Thyroid gland (tissue), 4 donors: ENCODE measurements at regions of chr16 and their contacts with region 1.

Region 1: DNA sequence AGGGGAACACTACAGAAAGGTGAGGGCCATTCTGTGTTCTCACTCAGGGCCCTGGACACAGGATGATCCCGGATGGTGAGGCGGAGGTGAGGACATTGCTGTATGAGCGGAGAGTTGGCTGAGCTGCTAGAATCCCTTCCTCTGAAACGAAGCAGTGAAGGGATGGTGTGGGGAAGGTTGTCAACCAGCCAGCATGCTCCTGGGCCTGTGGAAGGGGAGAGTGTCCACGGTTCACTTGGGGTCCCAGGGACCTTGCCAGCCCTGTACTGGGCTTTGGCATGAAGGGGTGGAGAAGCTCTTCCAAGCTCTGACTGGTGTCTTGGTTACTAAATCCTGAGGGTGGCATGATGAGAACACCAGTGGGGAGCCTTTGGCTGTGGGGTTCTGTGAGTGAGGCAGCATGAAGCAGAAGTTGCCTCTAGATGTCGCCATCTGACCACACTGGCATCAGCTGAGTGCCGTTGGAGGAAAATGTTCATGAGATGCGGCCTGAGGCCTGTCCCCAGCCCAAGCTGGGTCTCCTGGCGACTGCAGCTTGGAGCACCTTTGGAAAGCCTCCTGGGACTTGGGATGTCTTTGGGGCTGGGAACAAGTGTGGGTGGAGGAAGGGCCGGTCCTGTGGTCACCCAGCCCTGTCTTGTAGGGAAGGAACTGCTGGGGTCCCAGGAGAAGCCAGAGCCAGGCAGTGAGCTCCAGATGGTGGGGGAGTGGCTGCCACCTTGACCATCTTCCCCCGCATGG is 14.8 kb downstream of the PDP2 start:
- DNase-seq: peak; percentile 80 to 82
- H3K4me3 ChIP-seq: no peak overlapping the region
- H3K27ac ChIP-seq: peak overlapping the region in 1 of 3 donors; percentile 5
- H3K4me1 ChIP-seq: peaks cover 49 to 62% of the 10 kb centered on the region in 2 donors
- H3K27me3 ChIP-seq: no peaks in the 10 kb centered on the region
- CTCF ChIP-seq: peak; percentile 65 to 95 (median 90)
- POLR2A ChIP-seq: no peak

Region 2: GRCh38 chr16:66872943-66873684 is 22.0 kb before region 1 on chr16:
- intact Hi-C with region 1: no loop called
- DNase-seq: peak; percentile 86 to 87
- H3K4me3 ChIP-seq: peak overlapping the region in 1 of 3 donors; percentile 21
- H3K27ac ChIP-seq: peak overlapping the region; percentile 81 to 88 (median 88)
- H3K4me1 ChIP-seq: peaks cover 19 to 23% of the 10 kb centered on the region in 2 donors
- H3K27me3 ChIP-seq: no peaks in the 10 kb centered on the region
- CTCF ChIP-seq: peak; percentile 72 to 88 (median 82)
- POLR2A ChIP-seq: peak in 1 of 2 donors; percentile 18

Region 3: DNA sequence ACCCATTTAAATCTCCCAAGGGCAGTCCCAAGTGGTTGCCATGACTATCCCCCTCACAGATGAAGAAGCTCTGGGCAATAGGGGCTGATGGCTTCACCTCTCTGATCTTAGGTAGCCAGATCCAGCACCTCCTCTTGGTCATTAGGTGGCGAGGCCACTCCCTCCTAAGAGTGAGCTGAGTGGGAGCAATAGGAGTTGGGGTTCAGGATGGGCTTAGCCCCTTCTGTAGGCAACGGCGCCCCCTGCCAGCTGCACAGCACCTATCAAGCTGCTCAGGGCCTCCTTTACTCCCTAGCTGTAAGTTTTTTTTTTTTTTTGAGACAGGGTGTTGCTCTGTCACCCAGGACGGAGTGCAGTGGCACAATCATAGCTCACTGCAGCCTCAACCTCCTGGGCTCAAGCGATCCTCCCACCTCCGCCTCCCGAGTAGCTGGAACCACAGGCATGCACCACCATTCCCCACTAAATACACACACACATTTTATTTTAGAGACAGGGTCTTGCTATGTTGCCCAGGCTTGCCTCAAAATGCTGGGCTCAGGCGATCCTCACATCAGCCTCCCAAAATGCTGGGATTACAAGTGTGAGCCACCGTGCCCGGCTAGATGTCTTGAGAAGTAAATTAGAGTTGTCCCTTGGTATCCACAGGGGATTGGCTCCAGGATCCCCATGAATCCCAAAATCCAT is 33.7 kb after region 1 on chr16:
- intact Hi-C with region 1: loop called (anchors 2 kb)
- DNase-seq: peak; percentile 39 to 51
- H3K4me3 ChIP-seq: no peak overlapping the region
- H3K27ac ChIP-seq: peak overlapping the region in 2 of 3 donors; percentile 29 to 91
- H3K4me1 ChIP-seq: peaks cover 31 to 54% of the 10 kb centered on the region in 2 donors
- H3K27me3 ChIP-seq: no peaks in the 10 kb centered on the region
- CTCF ChIP-seq: peak in 4 of 6 experiments; percentile 25 to 54 (median 42)
- POLR2A ChIP-seq: no peak